ENCODE measurements at regions of chr12 and their contacts with region 1.

Region 1: GRCh38 chr12:57782608-57783465 is at the start of gene TSFM:
- DNase-seq: peak; percentile 95 to 98
- H3K4me3 ChIP-seq: peak within 1 kb of the TSS; percentile 84 to 94 (median 93)
- H3K27ac ChIP-seq: peak within 1 kb of the TSS in 1 of 3 donors; percentile 64
- H3K4me1 ChIP-seq: peaks cover 11 to 37% of the 10 kb centered on the region in 2 donors
- H3K27me3 ChIP-seq: no peaks in the 10 kb centered on the region
- CTCF ChIP-seq: peak; percentile 79 to 96 (median 92)
- POLR2A ChIP-seq: peak in 1 of 2 donors; percentile 47
- total RNA-seq, gene TSFM: 19.4 to 32.0 (median 25.5) TPM

Region 2: DNA sequence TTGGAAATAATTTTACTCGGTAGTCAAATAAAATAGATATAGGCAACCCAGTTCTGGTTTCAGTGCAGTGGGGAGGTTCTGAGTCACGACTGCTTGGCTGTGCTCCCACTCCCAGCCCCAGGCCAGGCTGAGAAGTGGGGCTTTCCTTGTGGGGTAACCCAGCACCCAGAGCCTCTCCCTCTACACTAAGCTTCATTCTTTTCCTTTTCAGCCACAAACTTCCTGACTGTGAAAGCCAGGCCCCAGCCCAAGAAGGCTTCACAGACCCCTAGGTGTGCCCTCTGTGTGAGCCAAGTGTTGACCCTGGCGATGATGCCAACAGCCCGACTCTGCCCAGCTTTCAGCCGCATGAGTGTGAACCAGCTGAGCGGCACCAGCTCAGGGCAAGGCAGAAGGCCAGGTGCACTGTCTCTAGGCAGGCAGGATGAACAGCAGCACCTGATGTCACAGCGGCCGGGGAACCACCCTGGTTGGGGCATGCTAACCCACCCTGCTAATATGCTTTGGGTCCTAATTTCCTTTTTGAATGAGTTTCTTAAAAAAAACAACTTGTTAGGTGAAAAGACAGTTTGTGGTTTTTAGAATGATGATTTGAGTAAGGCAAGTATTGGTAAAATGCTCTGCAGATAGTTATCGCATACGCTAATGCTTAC is 116.3 kb after region 1 on chr12:
- intact Hi-C with region 1: loop called (anchors 5 kb)
- DNase-seq: peak; percentile 75
- H3K4me3 ChIP-seq: no peak overlapping the region
- H3K27ac ChIP-seq: peak overlapping the region; percentile 46 to 69 (median 57)
- H3K4me1 ChIP-seq: peaks cover 52 to 58% of the 10 kb centered on the region in 2 donors
- H3K27me3 ChIP-seq: no peaks in the 10 kb centered on the region
- CTCF ChIP-seq: no peak
- POLR2A ChIP-seq: peak in 1 of 2 donors; percentile 9